Right lobe of liver (tissue), 6 donors: ENCODE measurements at regions of chr16 and their contacts with region 1.

Region 1: DNA sequence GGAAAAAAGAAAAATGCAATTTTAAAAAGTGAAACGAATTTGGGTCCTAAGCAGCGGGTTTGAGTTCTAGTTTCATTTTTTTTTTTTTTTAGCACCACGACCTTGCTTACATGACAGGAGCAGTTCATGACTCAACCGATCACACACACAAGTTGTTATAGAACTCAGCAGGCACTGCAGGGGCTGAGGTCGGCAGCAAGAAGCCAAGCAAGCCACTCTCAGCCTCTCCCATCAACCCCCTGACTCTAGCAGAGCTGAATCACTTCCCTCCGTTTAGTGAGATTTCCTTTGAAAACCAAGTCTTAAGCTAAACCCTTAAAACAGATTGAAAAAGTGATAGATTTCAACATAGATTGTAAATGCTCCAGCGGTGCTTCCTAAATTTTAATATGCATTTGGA is 520.8 kb downstream of the HAPSTR1 start:
- DNase-seq: no peak
- ATAC-seq: no peak
- H3K4me3 ChIP-seq: no peak overlapping the region
- H3K27ac ChIP-seq: no peak overlapping the region
- H3K4me1 ChIP-seq: no peaks in the 10 kb centered on the region
- H3K27me3 ChIP-seq: no peaks in the 10 kb centered on the region
- CTCF ChIP-seq: no peak
- POLR2A ChIP-seq: no peak

Region 2: DNA sequence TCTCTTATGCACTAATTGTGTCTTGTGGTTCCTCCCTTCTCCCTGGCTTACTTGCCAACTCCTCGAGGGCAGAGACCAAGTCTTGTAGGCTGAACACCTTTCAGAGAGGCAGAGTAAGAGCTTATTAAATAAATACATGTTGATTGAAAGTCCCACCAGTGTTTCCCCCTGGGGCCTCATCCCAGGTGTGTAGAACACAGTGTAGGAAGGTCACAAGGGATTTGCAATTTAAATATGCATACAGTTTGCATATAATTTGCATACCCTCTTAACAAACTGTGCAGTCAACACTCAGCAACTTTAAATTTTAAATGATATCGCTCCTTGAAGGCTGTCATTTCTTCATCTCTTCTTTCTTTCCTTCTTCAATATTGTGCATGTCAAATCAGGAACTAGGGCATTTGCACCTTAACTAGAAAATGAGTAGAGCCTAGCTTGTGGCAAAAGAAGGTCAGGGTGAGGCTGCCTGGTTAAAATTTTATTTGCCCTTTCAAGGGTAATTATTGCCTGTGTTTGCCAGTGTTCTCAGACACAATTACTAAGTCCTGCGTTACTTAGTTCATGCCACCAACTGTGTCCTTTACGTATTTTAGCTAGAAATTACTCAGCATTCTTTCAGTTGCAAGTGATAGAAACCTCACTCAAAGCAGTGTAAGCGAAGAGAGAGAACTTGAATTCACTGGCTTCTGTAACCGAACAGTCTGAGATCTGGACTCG is 55.2 kb before region 1 on chr16:
- intact Hi-C with region 1: loop called in 1 of 2 experiments (anchors 10 kb)
- DNase-seq: no peak
- ATAC-seq: peak in 2 of 4 donors; percentile 30 to 50
- H3K4me3 ChIP-seq: no peak overlapping the region
- H3K27ac ChIP-seq: no peak overlapping the region
- H3K4me1 ChIP-seq: peaks cover 0 to 5% (median 0%) of the 10 kb centered on the region in 4 donors
- H3K27me3 ChIP-seq: no peaks in the 10 kb centered on the region
- CTCF ChIP-seq: no peak
- POLR2A ChIP-seq: no peak

Region 3: GRCh38 chr16:9578459-9578858 is 33.8 kb before region 1 on chr16:
- intact Hi-C with region 1: no loop called
- DNase-seq: no peak
- ATAC-seq: no peak
- H3K4me3 ChIP-seq: no peak overlapping the region
- H3K27ac ChIP-seq: no peak overlapping the region
- H3K4me1 ChIP-seq: no peaks in the 10 kb centered on the region
- H3K27me3 ChIP-seq: no peaks in the 10 kb centered on the region
- CTCF ChIP-seq: no peak
- POLR2A ChIP-seq: no peak

Region 4: DNA sequence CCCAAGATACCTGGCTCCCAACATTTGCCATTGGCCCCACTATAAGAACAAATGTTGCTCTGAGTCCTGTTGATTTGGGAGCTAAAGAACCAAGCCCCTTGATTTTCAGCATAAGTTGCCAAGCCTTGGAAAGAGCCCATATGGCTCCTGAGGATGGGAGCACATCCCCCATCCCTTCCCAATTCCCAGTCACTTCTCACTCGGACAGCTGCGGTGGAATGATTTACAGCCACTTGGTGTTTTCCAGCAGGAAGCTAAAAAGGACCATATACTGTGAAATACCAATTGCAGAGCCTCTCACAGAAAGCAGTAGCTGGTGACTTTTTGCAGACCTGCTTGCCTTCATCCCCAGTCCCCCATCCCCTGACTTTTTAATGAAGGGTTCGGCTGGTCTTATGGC is 45.4 kb after region 1 on chr16:
- intact Hi-C with region 1: no loop called
- DNase-seq: no peak
- ATAC-seq: no peak
- H3K4me3 ChIP-seq: no peak overlapping the region
- H3K27ac ChIP-seq: no peak overlapping the region
- H3K4me1 ChIP-seq: no peaks in the 10 kb centered on the region
- H3K27me3 ChIP-seq: no peaks in the 10 kb centered on the region
- CTCF ChIP-seq: no peak
- POLR2A ChIP-seq: no peak